PC-9 (cell line): ENCODE measurements at regions of chr2 and their contacts with region 1.

Region 1: DNA sequence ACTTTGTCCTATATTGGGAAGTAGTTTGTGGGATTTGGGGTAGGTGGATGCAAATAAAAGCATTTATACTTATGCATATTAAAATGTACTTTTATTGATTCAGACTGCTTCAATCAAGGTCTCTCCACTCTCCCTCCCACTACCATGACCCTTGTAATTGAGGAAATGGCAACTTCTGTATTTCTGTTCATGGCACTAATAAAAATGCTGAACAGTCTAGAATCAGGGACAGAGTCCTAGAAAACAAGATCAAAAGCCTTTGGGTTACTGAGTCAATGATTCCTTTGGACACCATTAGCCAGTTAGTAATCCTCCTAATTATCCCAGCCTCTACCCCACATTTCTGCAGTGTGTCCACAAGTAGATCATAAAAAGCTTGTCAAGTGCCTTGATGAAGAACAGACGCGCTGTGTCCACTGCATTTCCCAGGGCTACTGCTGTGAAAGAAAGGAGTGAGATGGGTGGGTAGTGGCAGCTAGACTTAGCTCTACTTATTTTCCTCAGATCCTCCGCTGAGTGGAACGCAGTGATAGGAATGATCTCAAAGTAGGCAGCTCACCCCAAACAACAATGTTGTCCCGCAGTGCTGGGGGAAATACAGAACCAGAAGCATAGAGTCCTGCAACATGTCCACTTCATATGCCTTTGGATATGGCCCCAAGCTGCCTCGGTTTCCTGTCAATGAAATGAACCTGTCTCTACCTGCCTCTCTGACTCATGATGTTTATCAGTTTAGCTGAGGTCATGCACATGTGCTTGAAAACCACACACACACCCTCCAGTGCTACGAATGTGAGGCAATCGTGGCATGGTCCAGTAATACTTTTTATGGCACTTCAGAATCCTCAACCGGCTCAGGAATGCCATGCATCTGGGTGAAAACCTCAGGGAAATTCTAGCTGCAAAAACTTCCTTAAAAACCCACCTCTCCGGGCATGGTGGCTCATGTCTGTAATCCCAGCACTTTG is 115.5 kb downstream of the COL6A3 start:
- DNase-seq: peak; percentile 90
- H3K4me3 ChIP-seq: no peak overlapping the region
- H3K27ac ChIP-seq: no peak overlapping the region
- H3K4me1 ChIP-seq: peaks cover 24% of the 10 kb centered on the region
- H3K27me3 ChIP-seq: no peaks in the 10 kb centered on the region
- CTCF ChIP-seq: no peak

Region 2: GRCh38 chr2:237201461-237202287 is 96.8 kb before region 1 on chr2:
- CTCF ChIA-PET with region 1: no interaction called
- POLR2A ChIA-PET with region 1: no interaction called
- intact Hi-C with region 1: loop called (anchors 1 kb)
- DNase-seq: peak; percentile 94 to 97
- H3K4me3 ChIP-seq: peak overlapping the region; percentile 36; the same call in 1 of the 2 replicates
- H3K27ac ChIP-seq: peak overlapping the region; percentile 86
- H3K4me1 ChIP-seq: peaks cover 64% of the 10 kb centered on the region
- H3K27me3 ChIP-seq: no peaks in the 10 kb centered on the region
- CTCF ChIP-seq: no peak

Region 3: GRCh38 chr2:237253046-237253702 is 45.3 kb before region 1 on chr2:
- CTCF ChIA-PET with region 1: no interaction called
- POLR2A ChIA-PET with region 1: no interaction called
- intact Hi-C with region 1: loop called (anchors 1 kb)
- DNase-seq: peak; percentile 23 to 89
- H3K4me3 ChIP-seq: no peak overlapping the region
- H3K27ac ChIP-seq: peak overlapping the region; percentile 26
- H3K4me1 ChIP-seq: peaks cover 24% of the 10 kb centered on the region
- H3K27me3 ChIP-seq: no peaks in the 10 kb centered on the region
- CTCF ChIP-seq: peak; percentile 44; the same call in 1 of the 2 replicates

Region 4: DNA sequence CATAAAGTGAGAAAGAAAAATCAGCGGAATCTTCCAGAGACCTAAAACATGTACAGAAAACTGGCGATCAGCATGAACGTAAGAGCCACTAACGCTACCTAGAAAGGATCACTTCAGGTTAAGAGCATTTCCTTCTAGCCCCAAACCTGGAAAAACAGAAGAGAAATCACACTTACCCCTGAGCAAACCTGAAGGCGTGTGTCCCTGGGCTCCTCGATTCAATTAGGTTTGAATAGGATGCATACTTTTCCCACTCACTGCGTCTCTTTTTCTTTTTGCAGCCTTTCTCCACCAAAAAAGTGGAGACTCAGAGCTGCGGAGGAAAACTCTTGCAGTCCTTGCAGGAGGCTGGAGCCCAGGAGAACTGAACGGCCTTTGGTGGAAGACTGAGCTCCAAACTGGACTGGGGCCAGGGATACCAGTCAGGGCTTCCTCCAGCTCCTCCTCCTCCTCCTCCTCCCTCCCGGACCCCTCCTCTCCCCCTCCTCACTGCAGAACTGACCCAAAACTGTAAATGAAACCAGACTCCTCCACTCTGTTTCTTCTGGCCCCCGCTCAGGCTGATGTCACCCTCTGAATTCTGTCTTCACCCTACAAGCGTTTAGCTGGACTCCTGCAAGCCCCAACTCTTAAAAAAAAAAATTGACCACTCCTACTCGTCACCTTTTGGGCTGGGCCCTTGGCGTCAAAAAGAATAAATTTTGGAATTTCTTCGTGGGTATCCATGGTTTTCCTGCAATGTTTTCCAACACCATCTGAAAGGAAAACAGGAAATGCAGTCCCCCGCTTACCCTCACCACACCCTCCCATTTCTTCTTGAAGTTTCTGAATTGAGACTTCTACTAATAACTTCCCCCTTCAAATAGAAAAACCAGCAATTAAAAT is 115.6 kb after region 1 on chr2 and contains the start of gene COL6A3:
- CTCF ChIA-PET with region 1: interaction called, 10 read pairs
- POLR2A ChIA-PET with region 1: no interaction called
- intact Hi-C with region 1: no loop called
- DNase-seq: no peak
- H3K4me3 ChIP-seq: no peak within 1 kb of the TSS
- H3K27ac ChIP-seq: no peak within 1 kb of the TSS
- H3K4me1 ChIP-seq: no peaks in the 10 kb centered on the region
- H3K27me3 ChIP-seq: no peaks in the 10 kb centered on the region
- CTCF ChIP-seq: no peak
- total RNA-seq, gene COL6A3: 0.57 and 0.75 TPM in 2 replicates

Region 5: GRCh38 chr2:237483040-237483721 is 184.7 kb after region 1 on chr2:
- CTCF ChIA-PET with region 1: no interaction called
- POLR2A ChIA-PET with region 1: no interaction called
- intact Hi-C with region 1: loop called (anchors 5 kb)
- DNase-seq: peak; percentile 88 to 98
- H3K4me3 ChIP-seq: no peak overlapping the region
- H3K27ac ChIP-seq: peak overlapping the region; percentile 66
- H3K4me1 ChIP-seq: peaks cover 41% of the 10 kb centered on the region
- H3K27me3 ChIP-seq: no peaks in the 10 kb centered on the region
- CTCF ChIP-seq: peak; percentile 73

Region 6: GRCh38 chr2:237500681-237501424 is 202.4 kb after region 1 on chr2:
- CTCF ChIA-PET with region 1: no interaction called
- POLR2A ChIA-PET with region 1: no interaction called
- intact Hi-C with region 1: no loop called
- DNase-seq: peak; percentile 95 to 100
- H3K4me3 ChIP-seq: peak overlapping the region; percentile 21; the same call in 1 of the 2 replicates
- H3K27ac ChIP-seq: peak overlapping the region; percentile 93
- H3K4me1 ChIP-seq: peaks cover 68% of the 10 kb centered on the region
- H3K27me3 ChIP-seq: no peaks in the 10 kb centered on the region
- CTCF ChIP-seq: no peak